Esophagus muscularis mucosa (tissue), 4 donors: ENCODE measurements at regions of chr2 and their contacts with region 1.

Region 1: GRCh38 chr2:201451292-201452057 is at the starts of genes STRADB and TRAK2:
- DNase-seq: peak; percentile 98
- H3K4me3 ChIP-seq: peak within 1 kb of the TSS; percentile 64 to 93 (median 85)
- H3K27ac ChIP-seq: peak within 1 kb of the TSS; percentile 90 to 94 (median 92)
- H3K4me1 ChIP-seq: peaks cover 40 to 61% (median 56%) of the 10 kb centered on the region in 4 donors
- H3K27me3 ChIP-seq: no peaks in the 10 kb centered on the region
- CTCF ChIP-seq: peak in 2 of 3 experiments; percentile 43 to 50
- EP300 ChIP-seq: no peak
- POLR2A ChIP-seq: peak; percentile 73
- total RNA-seq, gene STRADB: 13.6 to 15.6 (median 14.1) TPM
- total RNA-seq, gene TRAK2: 73.1 to 114 (median 91.6) TPM

Region 2: GRCh38 chr2:201257956-201258665 is 193.4 kb before region 1 on chr2:
- intact Hi-C with region 1: loop called (anchors 10 kb)
- DNase-seq: peak; percentile 92
- H3K4me3 ChIP-seq: peak overlapping the region; percentile 54 to 67 (median 63)
- H3K27ac ChIP-seq: peak overlapping the region; percentile 80 to 85 (median 82)
- H3K4me1 ChIP-seq: peaks cover 4 to 50% (median 45%) of the 10 kb centered on the region in 4 donors
- H3K27me3 ChIP-seq: no peaks in the 10 kb centered on the region
- CTCF ChIP-seq: peak in 1 of 3 experiments; percentile 12
- EP300 ChIP-seq: no peak
- POLR2A ChIP-seq: peak; percentile 17

Region 3: DNA sequence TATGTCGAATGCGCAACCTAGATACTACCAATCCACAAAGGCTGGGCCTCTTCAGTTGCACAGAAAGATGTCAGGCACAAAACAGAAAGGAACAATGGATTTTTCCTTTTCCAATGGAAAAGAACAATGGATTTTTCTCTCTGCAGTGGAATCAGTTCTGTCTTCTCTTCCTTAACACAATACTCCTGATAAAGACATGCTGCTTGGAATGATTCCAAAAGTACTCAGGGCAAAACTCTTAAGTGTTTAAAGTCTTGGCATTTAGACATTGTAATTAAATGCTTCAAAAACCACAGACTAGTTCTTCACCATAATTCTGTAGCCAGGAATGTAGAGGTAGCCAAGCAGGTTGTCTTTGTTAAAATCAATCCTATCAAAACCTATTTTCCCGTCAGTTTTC is 47.6 kb before region 1 on chr2:
- intact Hi-C with region 1: loop called (anchors 2 kb)
- DNase-seq: no peak
- H3K4me3 ChIP-seq: no peak overlapping the region
- H3K27ac ChIP-seq: peak overlapping the region in 3 of 4 donors; percentile 9 to 76 (median 71)
- H3K4me1 ChIP-seq: peaks cover 28 to 87% (median 77%) of the 10 kb centered on the region in 4 donors
- H3K27me3 ChIP-seq: no peaks in the 10 kb centered on the region
- CTCF ChIP-seq: no peak
- EP300 ChIP-seq: no peak
- POLR2A ChIP-seq: no peak

Region 4: DNA sequence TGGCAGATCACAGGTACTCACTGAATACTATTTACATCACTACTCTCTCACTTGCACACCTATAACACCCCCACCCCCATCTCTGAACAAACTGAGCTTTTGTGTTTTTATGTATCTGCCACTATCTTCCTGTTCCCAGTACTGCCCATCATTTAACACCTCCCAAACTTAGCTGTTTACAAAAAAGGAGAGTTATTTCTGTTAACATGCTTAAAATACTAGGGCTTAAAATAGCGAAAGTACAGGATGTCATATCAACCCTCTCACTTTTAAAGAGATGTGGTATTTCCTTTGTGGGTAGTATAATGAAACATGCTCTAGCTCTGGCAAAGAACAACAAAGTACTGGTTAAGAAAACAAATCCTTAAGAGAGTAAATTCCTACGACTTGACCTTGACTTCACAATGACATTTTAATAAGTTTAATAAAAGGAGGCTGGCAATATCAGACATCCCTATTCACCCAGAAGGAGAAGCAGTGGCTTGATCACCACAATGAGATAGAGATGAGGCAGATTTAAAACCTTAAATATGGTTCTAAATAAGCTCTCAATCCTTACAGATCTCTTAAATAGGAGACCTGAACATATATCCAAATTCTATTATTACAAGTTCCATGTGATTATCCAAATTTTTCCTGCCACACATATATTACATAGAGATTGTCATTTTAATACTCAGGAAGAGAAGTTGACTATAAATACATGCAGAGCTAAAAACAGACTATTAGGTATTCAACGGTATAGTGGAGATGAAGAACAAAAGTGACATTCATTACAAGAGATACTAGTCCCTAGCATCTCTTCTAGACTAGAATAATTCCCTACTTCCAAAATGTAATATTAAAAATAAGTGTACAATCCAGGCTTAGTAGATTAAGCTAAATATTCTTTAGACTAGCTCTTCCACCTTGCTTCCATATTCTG is 37.1 kb before region 1 on chr2:
- intact Hi-C with region 1: loop called (anchors 5 kb)
- DNase-seq: no peak
- H3K4me3 ChIP-seq: peak overlapping the region in 3 of 4 donors; percentile 11 to 28 (median 23)
- H3K27ac ChIP-seq: peak overlapping the region; percentile 61 to 76 (median 74)
- H3K4me1 ChIP-seq: peaks cover 68 to 72% (median 69%) of the 10 kb centered on the region in 4 donors
- H3K27me3 ChIP-seq: no peaks in the 10 kb centered on the region
- CTCF ChIP-seq: no peak
- EP300 ChIP-seq: no peak
- POLR2A ChIP-seq: no peak

Region 5: GRCh38 chr2:201558665-201559064 is 107.2 kb after region 1 on chr2:
- intact Hi-C with region 1: no loop called
- DNase-seq: no peak
- H3K4me3 ChIP-seq: no peak overlapping the region
- H3K27ac ChIP-seq: no peak overlapping the region
- H3K4me1 ChIP-seq: no peaks in the 10 kb centered on the region
- H3K27me3 ChIP-seq: no peaks in the 10 kb centered on the region
- CTCF ChIP-seq: no peak
- EP300 ChIP-seq: no peak
- POLR2A ChIP-seq: no peak

Region 6: DNA sequence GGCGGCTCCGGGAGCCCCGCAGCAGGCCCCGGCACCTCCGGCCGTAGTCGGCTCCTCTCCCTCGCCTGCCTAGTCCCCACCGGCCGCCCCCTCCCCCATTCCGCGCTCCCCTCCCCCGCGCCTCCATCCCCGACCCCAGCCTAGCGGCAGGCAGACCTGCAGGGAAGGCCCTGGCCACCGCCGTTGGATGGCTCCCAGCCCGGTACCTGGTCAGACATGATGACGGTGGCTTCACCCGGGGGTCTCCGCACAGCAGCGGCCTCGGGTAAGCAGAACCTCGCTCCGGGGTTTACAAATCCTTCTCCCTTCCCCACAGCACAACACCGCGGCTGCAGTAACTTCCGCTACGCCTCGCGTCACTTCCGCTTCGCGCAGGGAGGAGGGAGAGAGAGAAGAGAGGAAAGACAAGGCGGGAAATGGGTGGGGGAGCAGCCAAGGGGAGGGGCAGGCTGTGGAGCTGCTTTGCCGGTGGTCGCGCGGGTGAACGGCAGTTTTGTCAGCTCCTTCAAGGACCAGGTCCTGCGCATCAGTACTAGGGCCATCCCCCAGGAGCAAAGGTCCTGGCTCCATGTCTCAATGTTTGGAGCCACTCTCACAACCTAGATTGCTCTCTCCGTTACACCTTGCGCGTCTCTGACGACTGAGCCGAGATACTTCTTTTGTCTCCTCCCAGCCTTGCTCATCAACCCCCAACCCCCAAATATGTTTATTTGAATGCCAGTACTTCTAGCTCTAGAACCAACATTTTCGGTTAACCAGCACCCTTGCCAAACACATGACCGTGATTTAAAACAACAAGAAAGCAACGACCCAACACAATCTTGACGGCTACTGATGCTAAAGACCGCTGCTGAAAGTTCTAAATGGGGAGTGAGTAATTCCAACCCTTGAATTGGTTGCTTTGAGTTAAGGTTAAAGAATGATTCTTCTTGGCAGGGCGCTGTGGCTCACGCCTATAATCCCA is 787.0 kb after region 1 on chr2 and contains the start of gene SUMO1:
- intact Hi-C with region 1: no loop called
- DNase-seq: peak; percentile 97
- H3K4me3 ChIP-seq: peak within 1 kb of the TSS; percentile 96 to 99 (median 98)
- H3K27ac ChIP-seq: peak within 1 kb of the TSS; percentile 96 to 98 (median 98)
- H3K4me1 ChIP-seq: peaks cover 14 to 45% (median 42%) of the 10 kb centered on the region in 4 donors
- H3K27me3 ChIP-seq: no peaks in the 10 kb centered on the region
- CTCF ChIP-seq: no peak
- EP300 ChIP-seq: no peak
- POLR2A ChIP-seq: no peak
- total RNA-seq, gene SUMO1: 54.6 to 85.6 (median 74.3) TPM